RWPE1 (cell line): ENCODE measurements at regions of chr10 and their contacts with region 1.

Region 1: GRCh38 chr10:69914398-69915214 is 112.9 kb downstream of the COL13A1 start:
- DNase-seq: peak; percentile 79
- H3K27ac ChIP-seq: no peak overlapping the region
- CTCF ChIP-seq: peak; percentile 92

Region 2: GRCh38 chr10:69644658-69645295 is 269.8 kb before region 1 on chr10:
- CTCF ChIA-PET with region 1: interaction called, 16 read pairs
- POLR2A ChIA-PET with region 1: no interaction called
- DNase-seq: peak; percentile 85
- H3K27ac ChIP-seq: no peak overlapping the region
- CTCF ChIP-seq: peak; percentile 74

Region 3: DNA sequence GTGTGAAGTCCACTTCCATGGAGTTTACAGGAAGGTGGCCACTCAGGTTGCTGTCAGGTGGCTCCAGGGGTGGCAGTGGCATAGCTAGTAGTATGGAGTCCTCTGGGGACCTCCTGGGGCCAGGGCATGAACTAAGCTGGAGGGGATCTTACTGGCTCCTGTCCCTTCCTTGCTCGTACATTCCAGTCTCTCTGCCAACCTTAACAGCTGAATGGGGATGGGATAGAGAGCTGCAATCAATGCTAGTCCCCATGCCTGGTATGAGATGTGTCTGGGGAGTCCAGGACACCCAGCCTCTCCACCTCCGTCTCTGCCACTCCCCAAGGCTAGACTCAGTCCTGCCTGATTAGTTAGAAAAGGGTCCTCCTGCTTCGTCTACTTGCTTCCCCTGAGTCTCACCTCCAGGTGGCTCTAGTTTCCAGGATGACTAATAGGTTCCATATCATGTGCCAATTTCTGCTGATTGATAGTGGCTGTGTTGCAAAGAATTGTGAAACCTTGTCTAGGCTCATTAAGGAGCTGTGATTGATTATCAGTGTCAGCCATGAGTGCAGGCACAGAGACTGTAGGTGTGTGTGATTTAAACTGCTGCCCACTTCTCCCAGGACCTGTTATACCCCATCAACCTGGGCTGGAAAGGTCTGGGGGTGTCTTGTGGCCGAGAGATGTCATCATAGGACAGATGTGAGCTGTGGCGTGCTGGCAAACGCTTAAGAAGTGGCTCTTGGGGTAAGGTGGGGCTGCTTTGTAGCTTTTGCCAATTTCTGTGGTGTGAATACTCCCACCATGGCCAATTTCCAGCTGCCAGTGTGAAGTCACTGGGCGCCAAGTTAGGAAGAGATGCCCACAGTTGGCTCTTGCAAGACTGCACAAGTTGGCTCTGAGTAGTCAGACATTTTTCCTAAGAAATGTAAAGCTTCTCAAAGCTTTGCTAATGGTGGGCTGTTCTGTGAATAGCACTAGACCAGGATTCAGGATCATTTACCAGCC is 53.1 kb before region 1 on chr10:
- CTCF ChIA-PET with region 1: interaction called, 31 read pairs
- POLR2A ChIA-PET with region 1: no interaction called
- DNase-seq: peak; percentile 88
- H3K27ac ChIP-seq: peak overlapping the region; percentile 76
- CTCF ChIP-seq: no peak; the same call in 1 of the 2 replicates

Region 4: GRCh38 chr10:69894156-69894555 is 20.4 kb before region 1 on chr10:
- CTCF ChIA-PET with region 1: interaction called, 11 read pairs
- POLR2A ChIA-PET with region 1: no interaction called
- DNase-seq: no peak
- H3K27ac ChIP-seq: no peak overlapping the region
- CTCF ChIP-seq: no peak

Region 5: DNA sequence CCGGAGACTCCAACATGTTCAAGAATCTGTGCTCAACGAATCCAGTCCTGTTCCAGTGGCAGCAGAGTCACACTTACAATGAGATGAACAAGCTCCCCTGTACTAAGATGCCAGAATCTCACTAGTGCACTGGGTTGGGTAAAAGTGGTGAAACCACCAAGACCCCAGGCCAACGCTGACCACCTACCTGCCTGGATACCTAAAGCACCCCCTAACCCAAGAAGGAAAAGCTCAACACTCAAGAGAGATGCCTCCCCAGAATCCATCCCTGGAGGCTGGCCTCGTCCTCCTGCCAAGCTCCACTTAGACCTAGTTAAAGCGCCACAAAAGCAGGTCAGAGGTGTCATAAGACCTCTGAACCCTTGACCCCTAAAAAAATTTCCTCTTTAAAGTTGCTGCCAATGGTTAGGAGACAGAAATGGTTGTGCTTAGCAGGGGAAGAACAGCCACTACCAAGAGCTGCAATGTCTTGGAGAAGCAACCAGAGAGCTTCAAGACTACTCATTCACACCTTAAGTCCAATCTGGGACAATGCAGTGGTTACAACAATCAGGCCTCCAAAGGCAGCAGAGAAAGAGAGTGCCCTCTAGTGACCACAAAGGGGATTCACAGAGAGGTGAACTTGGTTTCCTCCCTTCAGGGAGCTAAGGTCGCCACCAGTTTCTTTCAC is 43.4 kb after region 1 on chr10:
- CTCF ChIA-PET with region 1: interaction called, 14 read pairs
- POLR2A ChIA-PET with region 1: no interaction called
- DNase-seq: peak; percentile 67
- H3K27ac ChIP-seq: no peak overlapping the region
- CTCF ChIP-seq: peak; percentile 68